WTC11 (cell line): ENCODE measurements at regions of chr3 and their contacts with region 1.

Region 1: GRCh38 chr3:49867871-49868321 is 1.8 kb downstream of the CAMKV start:
- DNase-seq: peak; percentile 78
- ATAC-seq: peak; percentile 56
- H3K4me3 Mint-ChIP-seq: peak overlapping the region; percentile 65
- H3K27ac Mint-ChIP-seq: peak overlapping the region; percentile 70; the same call in 1 of the 2 replicates
- H3K4me1 Mint-ChIP-seq: peaks cover 44% of the 10 kb centered on the region
- H3K27me3 Mint-ChIP-seq: peaks cover 4% of the 10 kb centered on the region
- CTCF ChIP-seq: no peak

Region 2: DNA sequence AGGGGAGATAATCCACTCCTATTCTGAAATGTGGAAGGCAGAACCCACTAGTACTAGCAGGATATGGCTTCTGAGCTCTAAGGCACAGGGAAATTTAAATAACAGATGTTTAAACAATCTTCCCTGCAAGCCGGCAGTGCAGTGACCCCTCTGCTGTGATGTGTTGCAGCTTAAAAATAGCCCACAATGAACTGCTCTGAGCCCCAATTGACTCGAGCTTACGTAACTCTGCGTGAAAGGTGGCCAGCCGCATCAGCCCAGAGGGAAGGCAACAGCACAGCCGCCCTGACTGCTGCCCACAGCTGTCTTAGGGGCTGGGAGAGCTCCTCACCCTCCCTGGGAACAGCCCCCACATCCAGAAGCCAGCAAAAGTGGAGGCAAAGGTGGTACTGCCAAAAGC is 14.3 kb after region 1 on chr3:
- CTCF ChIA-PET with region 1: interaction called, 37 read pairs
- POLR2A ChIA-PET with region 1: interaction called, 10 read pairs
- DNase-seq: no peak
- ATAC-seq: no peak
- H3K4me3 Mint-ChIP-seq: no peak overlapping the region
- H3K27ac Mint-ChIP-seq: no peak overlapping the region; the same call in 1 of the 2 replicates
- H3K4me1 Mint-ChIP-seq: peaks cover 29% of the 10 kb centered on the region
- H3K27me3 Mint-ChIP-seq: no peaks in the 10 kb centered on the region
- CTCF ChIP-seq: no peak

Region 3: DNA sequence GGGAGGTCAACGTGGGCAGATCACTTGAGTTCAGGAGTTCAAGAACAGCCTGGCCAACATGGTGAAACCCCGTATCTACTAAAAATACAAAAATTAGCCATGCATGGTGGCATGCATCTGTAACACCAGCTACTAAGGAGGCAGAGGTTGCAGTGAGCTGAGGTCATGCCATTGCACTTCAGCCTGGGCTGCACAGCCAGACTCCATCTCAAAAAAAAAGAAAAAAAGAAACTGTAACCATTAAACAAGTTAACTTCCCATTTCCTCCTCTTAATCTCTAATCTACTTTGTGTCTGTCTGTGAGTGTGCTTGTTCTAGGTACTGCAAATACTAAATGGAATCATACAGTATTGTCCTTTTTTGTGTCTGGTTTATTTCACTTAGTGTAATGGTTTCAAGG is 74.8 kb after region 1 on chr3:
- CTCF ChIA-PET with region 1: no interaction called
- POLR2A ChIA-PET with region 1: no interaction called
- DNase-seq: no peak
- ATAC-seq: no peak
- H3K4me3 Mint-ChIP-seq: no peak overlapping the region
- H3K27ac Mint-ChIP-seq: no peak overlapping the region
- H3K4me1 Mint-ChIP-seq: peaks cover 8% of the 10 kb centered on the region
- H3K27me3 Mint-ChIP-seq: no peaks in the 10 kb centered on the region
- CTCF ChIP-seq: no peak